H1 (cell line): ENCODE measurements at regions of chr17 and their contacts with region 1.

Region 1: GRCh38 chr17:67390646-67391384 is 13.7 kb downstream of the PITPNC1 start:
- DNase-seq: no peak
- H3K4me3 ChIP-seq: no peak overlapping the region
- H3K27ac ChIP-seq: no peak overlapping the region
- H3K4me1 ChIP-seq: no peaks in the 10 kb centered on the region; a peak in 3 of 7 replicates
- H3K27me3 ChIP-seq: no peaks in the 10 kb centered on the region
- CTCF ChIP-seq: no peak
- EP300 ChIP-seq: no peak
- POLR2A ChIP-seq: no peak
- RAD21 ChIP-seq: no peak

Region 2: GRCh38 chr17:67467544-67468455 is 77.0 kb after region 1 on chr17:
- CTCF ChIA-PET with region 1: interaction called, 63 read pairs
- POLR2A ChIA-PET with region 1: no interaction called
- DNase-seq: no peak
- H3K4me3 ChIP-seq: no peak overlapping the region
- H3K27ac ChIP-seq: no peak overlapping the region
- H3K4me1 ChIP-seq: peaks cover 5 to 22% (median 10%) of the 10 kb centered on the region in 4 experiments; a peak in 6 of 7 replicates
- H3K27me3 ChIP-seq: no peaks in the 10 kb centered on the region; a peak in 1 of 7 replicates
- CTCF ChIP-seq: no peak
- EP300 ChIP-seq: no peak
- POLR2A ChIP-seq: no peak
- RAD21 ChIP-seq: no peak

Region 3: DNA sequence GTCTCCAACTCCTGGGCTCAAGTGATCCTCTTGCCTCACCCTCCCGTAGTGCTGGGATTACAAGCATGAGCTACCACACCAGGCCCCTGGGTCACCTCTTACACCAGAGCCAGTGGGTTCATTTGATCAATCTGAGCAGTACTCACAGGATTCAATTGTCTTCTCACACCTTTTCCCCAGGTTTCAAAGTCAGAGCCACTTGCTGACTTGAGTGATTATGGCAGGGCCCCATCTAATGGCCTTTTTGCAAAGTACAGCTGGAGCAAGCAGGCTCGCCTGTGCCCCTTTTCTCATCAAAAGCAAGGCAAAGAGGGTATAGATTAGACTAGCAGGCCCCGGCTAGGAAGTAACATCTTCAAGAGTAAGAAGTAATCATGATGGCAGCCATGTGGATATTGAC is 212.1 kb after region 1 on chr17:
- CTCF ChIA-PET with region 1: interaction called, 30 read pairs
- POLR2A ChIA-PET with region 1: no interaction called
- DNase-seq: peak; percentile 21 to 57
- H3K4me3 ChIP-seq: no peak overlapping the region
- H3K27ac ChIP-seq: no peak overlapping the region
- H3K4me1 ChIP-seq: peaks cover 0 to 4% (median 0%) of the 10 kb centered on the region in 4 experiments; a peak in 2 of 7 replicates
- H3K27me3 ChIP-seq: no peaks in the 10 kb centered on the region
- CTCF ChIP-seq: peak; percentile 44 to 84 (median 81)
- EP300 ChIP-seq: no peak
- POLR2A ChIP-seq: no peak
- RAD21 ChIP-seq: peak; percentile 89 to 91

Region 4: GRCh38 chr17:67629971-67630320 is 239.1 kb after region 1 on chr17:
- CTCF ChIA-PET with region 1: interaction called, 18 read pairs
- POLR2A ChIA-PET with region 1: no interaction called
- DNase-seq: no peak
- H3K4me3 ChIP-seq: no peak overlapping the region
- H3K27ac ChIP-seq: no peak overlapping the region
- H3K4me1 ChIP-seq: no peaks in the 10 kb centered on the region
- H3K27me3 ChIP-seq: no peaks in the 10 kb centered on the region
- CTCF ChIP-seq: peak in 2 of 3 experiments; percentile 42 to 43; a peak in 2 of 4 replicates
- EP300 ChIP-seq: no peak
- POLR2A ChIP-seq: no peak
- RAD21 ChIP-seq: peak; percentile 44 to 57